ENCODE measurements at regions of chr4 and their contacts with region 1.

Region 1: GRCh38 chr4:53558065-53558801 is 33.1 kb downstream of the LNX1 start:
- DNase-seq: peak in 1 of 2 donors; percentile 79
- H3K4me3 ChIP-seq: peak overlapping the region; percentile 11 to 59
- H3K27ac ChIP-seq: peak overlapping the region; percentile 81 to 85
- H3K4me1 ChIP-seq: peaks cover 0 to 7% of the 10 kb centered on the region in 2 donors
- H3K27me3 ChIP-seq: no peaks in the 10 kb centered on the region
- CTCF ChIP-seq: no peak

Region 2: GRCh38 chr4:53377319-53378170 is 180.7 kb before region 1 on chr4 and contains the start of gene FIP1L1:
- intact Hi-C with region 1: no loop called
- DNase-seq: peak; percentile 78 to 97
- H3K4me3 ChIP-seq: peak within 1 kb of the TSS; percentile 66 to 78
- H3K27ac ChIP-seq: peak within 1 kb of the TSS; percentile 82 to 84
- H3K4me1 ChIP-seq: peaks cover 2 to 3% of the 10 kb centered on the region in 2 donors
- H3K27me3 ChIP-seq: no peaks in the 10 kb centered on the region
- CTCF ChIP-seq: no peak
- total RNA-seq, gene FIP1L1: 20.4 TPM

Region 3: DNA sequence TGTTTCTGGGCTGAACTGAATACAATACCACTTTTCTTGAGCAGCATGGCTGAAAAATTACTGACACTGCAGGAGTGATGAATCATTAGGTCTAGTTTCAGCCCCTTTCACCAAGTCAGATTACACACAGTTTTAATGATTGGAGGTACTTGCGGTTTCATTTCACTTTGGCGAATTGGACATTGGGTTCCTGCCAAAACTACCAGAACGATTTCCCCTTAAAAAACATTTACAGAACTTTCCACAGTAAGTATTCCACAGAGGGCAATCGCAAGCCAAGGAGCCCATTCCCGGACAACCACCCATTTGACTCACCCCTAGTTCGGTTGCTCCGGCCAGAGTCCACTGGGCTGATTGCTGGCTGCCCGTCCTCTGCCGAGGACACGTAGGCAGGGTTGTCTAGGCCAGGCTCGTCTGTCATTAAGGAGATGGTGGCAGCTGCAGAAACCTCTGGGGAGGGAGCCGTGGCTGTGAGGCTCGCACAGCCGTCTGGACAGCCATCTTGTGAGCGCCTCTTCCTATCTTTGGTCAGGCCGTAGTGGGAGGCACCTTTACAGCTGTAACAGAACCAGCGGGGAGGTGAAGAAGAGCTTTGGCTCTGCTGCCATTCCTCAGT is 50.5 kb before region 1 on chr4:
- intact Hi-C with region 1: loop called (anchors 5 kb)
- DNase-seq: peak; percentile 35 to 90
- H3K4me3 ChIP-seq: peak overlapping the region; percentile 21 to 53
- H3K27ac ChIP-seq: peak overlapping the region; percentile 76 to 85
- H3K4me1 ChIP-seq: peaks cover 0 to 10% of the 10 kb centered on the region in 2 donors
- H3K27me3 ChIP-seq: no peaks in the 10 kb centered on the region
- CTCF ChIP-seq: no peak

Region 4: GRCh38 chr4:53763813-53764597 is 205.8 kb after region 1 on chr4:
- intact Hi-C with region 1: no loop called
- DNase-seq: no peak
- H3K4me3 ChIP-seq: no peak overlapping the region
- H3K27ac ChIP-seq: peak overlapping the region in 1 of 2 donors; percentile 15
- H3K4me1 ChIP-seq: peaks cover 0 to 12% of the 10 kb centered on the region in 2 donors
- H3K27me3 ChIP-seq: no peaks in the 10 kb centered on the region
- CTCF ChIP-seq: no peak

Measured in ascending aorta (tissue), 2 donors.